ENCODE measurements at regions of chr6 and their contacts with region 1.

Region 1: DNA sequence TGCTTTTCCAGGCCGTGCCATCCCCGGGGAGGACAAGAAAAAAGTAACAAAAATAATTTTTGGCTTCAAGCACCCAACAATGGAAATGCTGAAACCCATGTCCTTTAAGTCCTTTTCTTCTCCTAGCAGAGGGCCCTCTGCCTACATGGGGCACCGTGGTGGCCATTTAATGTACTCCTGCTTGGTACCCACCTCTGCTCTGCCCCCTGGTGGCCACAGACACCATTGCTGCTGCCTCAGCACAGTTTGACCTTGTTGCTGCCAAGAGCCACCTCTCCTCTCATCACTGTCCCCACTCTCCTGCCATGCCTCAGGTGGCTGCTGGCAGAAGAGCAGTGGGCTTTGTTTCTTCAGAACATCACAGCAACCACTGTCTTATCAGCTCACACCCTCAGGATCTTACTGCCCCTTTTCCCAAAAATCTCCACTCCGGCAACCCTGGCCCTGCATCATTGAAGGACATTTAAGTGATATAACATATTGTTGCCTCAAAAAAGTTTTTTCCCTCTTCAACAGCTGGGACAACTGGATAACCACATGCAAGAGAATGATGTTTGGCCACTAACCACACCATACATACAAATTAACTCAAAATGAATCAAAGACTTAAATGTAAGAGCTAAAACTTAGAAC is 12.9 kb upstream of the ARMC2 start:
- DNase-seq: peak; percentile 36
- H3K4me3 ChIP-seq: no peak overlapping the region
- H3K27ac ChIP-seq: no peak overlapping the region
- H3K27me3 ChIP-seq: no peaks in the 10 kb centered on the region
- CTCF ChIP-seq: peak; percentile 84

Region 2: GRCh38 chr6:108541838-108542759 is 293.2 kb before region 1 on chr6:
- CTCF ChIA-PET with region 1: interaction called, 27 read pairs
- POLR2A ChIA-PET with region 1: no interaction called
- DNase-seq: peak; percentile 79
- H3K4me3 ChIP-seq: no peak overlapping the region
- H3K27ac ChIP-seq: no peak overlapping the region
- H3K27me3 ChIP-seq: peaks cover 2% of the 10 kb centered on the region
- CTCF ChIP-seq: peak; percentile 90

Region 3: GRCh38 chr6:108847738-108848115 is 12.4 kb after region 1 on chr6:
- CTCF ChIA-PET with region 1: interaction called, 13 read pairs
- POLR2A ChIA-PET with region 1: no interaction called
- DNase-seq: no peak
- H3K4me3 ChIP-seq: peak overlapping the region; percentile 81
- H3K27ac ChIP-seq: no peak overlapping the region
- H3K27me3 ChIP-seq: no peaks in the 10 kb centered on the region
- CTCF ChIP-seq: no peak

Region 4: DNA sequence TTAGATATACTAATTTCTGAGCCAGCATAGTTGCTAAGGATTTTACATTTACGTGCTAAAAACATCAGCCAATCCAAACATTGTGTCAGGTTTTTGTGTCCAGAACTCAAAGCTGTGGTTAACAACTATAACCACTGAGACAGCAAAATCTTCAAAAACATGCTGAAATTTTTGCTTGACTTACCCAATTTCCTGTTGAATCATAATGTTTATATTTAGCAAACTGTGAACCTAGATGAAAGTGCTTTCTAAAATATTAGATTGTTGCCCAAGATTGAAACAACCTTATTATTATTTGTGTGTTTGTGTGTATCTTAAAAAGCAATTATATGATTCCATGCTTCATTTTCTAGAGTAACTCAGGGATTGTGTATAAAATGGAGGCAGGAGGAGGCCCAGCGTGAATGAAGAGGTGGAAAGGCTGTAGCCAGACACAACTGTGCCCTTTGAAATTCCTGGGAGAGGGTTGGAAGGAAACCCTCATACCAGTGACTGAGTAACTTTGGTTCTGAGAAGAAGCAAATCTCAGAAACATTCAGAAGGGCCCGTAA is 60.9 kb after region 1 on chr6:
- CTCF ChIA-PET with region 1: interaction called, 10 read pairs
- POLR2A ChIA-PET with region 1: no interaction called
- DNase-seq: peak; percentile 55
- H3K4me3 ChIP-seq: no peak overlapping the region
- H3K27ac ChIP-seq: peak overlapping the region; percentile 89
- H3K27me3 ChIP-seq: no peaks in the 10 kb centered on the region
- CTCF ChIP-seq: no peak

Measured in AG04450 (cell line).